ENCODE measurements at regions of chr11 and their contacts with region 1.

Region 1: DNA sequence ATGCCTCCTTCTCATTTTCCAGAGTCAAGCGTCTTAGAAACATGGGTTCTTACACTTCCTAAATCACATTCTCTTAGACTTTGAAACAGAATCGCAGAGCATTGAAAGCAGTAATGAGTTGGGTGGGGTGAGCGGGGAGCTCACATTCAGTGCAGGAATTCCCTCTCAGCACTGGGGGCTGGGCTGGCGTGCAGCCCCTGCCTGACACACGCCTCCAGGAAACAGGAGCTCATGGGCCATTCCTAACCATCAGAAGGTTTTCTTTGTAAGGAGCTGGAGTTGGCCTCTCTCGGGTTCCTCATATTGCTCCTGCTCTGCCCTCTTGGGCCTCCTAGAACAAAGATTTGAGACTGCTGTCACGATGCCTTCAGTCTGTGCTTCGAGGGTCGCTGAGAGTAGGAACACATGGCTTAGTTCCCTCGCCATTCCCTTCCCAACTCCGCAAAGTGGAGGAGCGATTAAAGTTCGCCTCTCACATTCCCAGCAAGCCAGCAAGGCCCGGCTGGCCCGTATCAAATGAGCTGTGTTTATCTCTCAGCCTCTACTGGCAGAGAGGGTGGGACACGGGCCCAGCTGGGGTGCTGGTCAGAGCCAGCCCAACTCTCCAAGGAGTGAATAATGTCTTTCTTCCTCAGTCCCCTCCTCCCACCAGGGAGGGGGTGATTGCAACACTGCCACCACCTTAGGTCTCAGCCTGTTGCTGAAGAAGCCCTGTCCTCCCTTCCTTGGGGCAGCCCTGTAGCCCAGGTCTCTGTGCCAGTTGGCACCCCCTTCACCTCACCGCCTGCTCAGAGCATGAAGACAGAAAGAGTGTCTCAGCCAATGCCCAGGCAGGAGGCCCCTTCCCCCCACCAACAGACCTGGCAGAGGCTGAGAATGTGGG is 10.4 kb downstream of the CHRDL2 start:
- DNase-seq: no peak
- ATAC-seq: peak; percentile 70
- H3K4me3 Mint-ChIP-seq: no peak overlapping the region
- H3K27ac Mint-ChIP-seq: no peak overlapping the region
- H3K4me1 Mint-ChIP-seq: peaks cover 11% of the 10 kb centered on the region
- H3K27me3 Mint-ChIP-seq: peaks cover 34% of the 10 kb centered on the region
- CTCF ChIP-seq: no peak

Region 2: GRCh38 chr11:74611369-74611861 is 109.4 kb before region 1 on chr11:
- CTCF ChIA-PET with region 1: interaction called, 4 read pairs
- POLR2A ChIA-PET with region 1: interaction called, 11 read pairs
- DNase-seq: no peak
- ATAC-seq: no peak
- H3K4me3 Mint-ChIP-seq: no peak overlapping the region
- H3K27ac Mint-ChIP-seq: no peak overlapping the region
- H3K4me1 Mint-ChIP-seq: no peaks in the 10 kb centered on the region
- H3K27me3 Mint-ChIP-seq: no peaks in the 10 kb centered on the region
- CTCF ChIP-seq: no peak; the same call in 1 of the 2 replicates